GM23248 (cell line): ENCODE measurements at regions of chr15 and their contacts with region 1.

Region 1: DNA sequence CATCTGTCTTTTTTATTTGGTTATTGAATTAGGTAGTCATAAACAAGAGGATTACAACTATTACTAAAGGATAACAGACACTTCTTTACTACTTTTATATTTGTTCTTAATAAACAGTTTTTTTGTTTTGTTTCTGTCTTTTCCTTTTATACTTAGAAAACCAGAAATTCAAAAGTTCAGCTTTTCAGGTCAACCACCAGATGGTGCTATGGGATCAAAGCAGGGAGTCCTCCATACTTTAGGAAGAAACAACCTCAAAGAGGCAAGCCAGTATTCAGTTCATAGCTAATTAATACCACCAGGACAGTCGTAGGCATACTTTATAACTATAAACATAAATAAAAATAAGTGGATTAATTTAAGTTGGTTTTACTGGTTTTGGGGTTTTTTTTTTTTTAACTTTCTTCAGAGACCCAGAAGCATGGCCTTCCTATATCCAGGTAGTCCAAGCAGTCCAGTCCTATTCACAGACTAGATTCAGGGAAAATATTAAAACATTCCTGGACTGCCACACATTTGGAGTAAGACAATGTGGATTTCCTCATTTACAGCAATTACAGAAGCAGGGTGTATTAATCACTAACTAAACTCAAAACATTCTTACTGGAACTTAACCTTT is 16.0 kb upstream of the EID1 start:
- DNase-seq: peak; percentile 84
- H3K4me3 ChIP-seq: no peak overlapping the region
- H3K27ac ChIP-seq: no peak overlapping the region
- H3K4me1 ChIP-seq: peaks cover 53% of the 10 kb centered on the region
- H3K27me3 ChIP-seq: no peaks in the 10 kb centered on the region

Region 2: DNA sequence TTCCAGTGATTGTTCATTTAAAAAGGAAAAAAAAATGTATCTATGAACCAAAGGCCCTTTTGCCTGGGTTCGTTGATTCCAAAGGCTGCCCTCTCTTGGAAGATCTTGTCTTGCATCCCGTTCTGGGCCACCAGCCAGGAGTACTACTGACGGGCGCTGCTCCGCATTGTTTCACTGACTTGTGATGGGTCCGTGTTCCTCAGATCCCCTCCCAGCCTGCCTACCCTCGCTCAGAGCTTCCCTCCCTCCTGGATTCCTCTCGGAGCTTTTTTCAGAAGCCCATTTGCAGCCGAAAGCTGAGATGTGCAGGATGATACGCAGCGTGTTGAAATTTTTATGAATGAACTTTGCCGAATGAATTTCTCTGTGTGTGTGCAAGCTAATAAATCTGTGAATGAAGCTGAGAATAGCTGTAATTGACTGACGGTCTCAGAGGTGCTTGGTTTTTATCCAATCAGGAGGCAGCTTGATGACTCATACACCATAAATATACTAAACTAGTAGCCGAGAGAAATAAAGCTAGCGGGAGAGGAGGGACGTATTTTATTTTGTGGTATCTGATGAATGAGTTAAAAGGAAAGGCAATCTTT is 101.7 kb after region 1 on chr15 and contains the start of gene SHC4:
- in situ Hi-C with region 1: loop called (anchors 10 kb)
- DNase-seq: peak; percentile 92
- H3K4me3 ChIP-seq: peak within 1 kb of the TSS; percentile 89
- H3K27ac ChIP-seq: peak within 1 kb of the TSS; percentile 42
- H3K4me1 ChIP-seq: peaks cover 11% of the 10 kb centered on the region; the same call in 1 of the 2 replicates
- H3K27me3 ChIP-seq: no peaks in the 10 kb centered on the region
- total RNA-seq, gene SHC4: 0.43 and 0.76 TPM in 2 replicates

Region 3: DNA sequence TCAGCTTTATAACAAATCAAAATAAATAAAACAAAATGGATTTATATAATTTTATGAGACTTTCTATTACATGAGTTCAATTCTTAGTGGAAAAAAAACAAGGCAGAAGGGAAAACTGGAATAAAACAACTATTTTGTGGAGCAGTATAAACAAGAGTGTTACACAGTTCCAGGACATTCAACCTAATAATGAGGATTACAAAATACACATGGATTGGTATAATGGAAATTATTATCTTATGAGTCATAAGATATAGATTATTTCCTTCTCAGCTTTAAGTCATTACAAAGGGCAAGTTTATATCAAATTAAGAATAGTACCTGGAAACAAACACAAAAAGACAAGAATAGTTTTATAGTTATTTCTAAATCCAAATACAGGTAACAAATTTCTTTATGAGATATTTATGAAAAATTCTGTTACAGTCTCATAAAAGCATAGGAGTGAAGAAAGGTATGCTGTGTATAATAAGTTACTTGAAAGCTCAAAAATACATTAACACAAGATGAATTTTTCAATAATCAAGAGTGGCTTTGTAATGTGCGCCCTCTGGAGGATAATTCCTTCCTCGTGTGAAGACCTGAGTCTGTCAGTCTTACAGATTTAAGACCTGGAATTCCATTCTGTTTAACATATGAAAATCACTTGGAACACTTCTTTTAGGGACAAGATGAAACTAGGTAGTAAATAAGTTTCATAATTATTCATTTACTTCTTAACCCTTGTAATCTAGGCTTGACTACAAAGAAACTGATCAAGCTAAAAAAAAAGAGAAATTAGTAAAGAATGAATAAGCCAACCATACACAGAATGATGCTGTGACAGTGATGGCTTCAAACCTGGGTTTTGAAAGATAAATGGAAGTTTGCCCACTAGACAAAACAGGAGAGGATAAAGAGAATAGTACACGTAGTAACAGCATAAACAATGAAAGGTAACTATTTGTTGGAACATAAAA is 284.0 kb after region 1 on chr15:
- in situ Hi-C with region 1: loop called (anchors 10 kb)
- DNase-seq: peak; percentile 75
- H3K4me3 ChIP-seq: no peak overlapping the region
- H3K27ac ChIP-seq: no peak overlapping the region; the same call in 1 of the 2 replicates
- H3K4me1 ChIP-seq: peaks cover 37% of the 10 kb centered on the region
- H3K27me3 ChIP-seq: no peaks in the 10 kb centered on the region

Region 4: GRCh38 chr15:49421991-49422390 is 560.1 kb after region 1 on chr15:
- in situ Hi-C with region 1: loop called (anchors 25 kb)
- DNase-seq: peak; percentile 69
- H3K4me3 ChIP-seq: peak overlapping the region; percentile 99
- H3K27ac ChIP-seq: peak overlapping the region; percentile 80
- H3K4me1 ChIP-seq: peaks cover 15% of the 10 kb centered on the region; the same call in 1 of the 2 replicates
- H3K27me3 ChIP-seq: no peaks in the 10 kb centered on the region

Region 5: GRCh38 chr15:50145451-50145872 is 1283.5 kb after region 1 on chr15:
- in situ Hi-C with region 1: loop called (anchors 25 kb)
- DNase-seq: peak; percentile 85
- H3K4me3 ChIP-seq: no peak overlapping the region
- H3K27ac ChIP-seq: no peak overlapping the region
- H3K4me1 ChIP-seq: peaks cover 13% of the 10 kb centered on the region
- H3K27me3 ChIP-seq: no peaks in the 10 kb centered on the region